ENCODE measurements at regions of chr21 and their contacts with region 1.

Region 1: DNA sequence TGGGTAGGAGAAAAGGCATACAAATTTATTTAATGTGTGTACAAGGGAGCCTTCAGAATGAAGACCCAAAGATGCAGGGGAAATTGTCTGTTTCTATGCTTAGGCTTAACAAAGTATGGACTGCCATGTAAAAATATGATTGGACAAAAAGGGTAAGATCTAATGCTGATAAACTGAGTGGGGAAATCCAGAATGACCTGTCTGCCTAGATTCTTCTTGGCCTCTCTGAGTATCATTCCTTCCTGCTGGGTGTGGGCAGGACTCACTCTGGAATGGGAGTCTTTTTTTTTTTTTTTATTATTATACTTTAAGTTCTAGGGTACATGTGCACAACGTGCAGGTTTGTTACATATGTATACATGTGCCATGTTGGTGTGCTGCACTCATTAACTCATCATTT is 61.0 kb downstream of the IGSF5 start:
- DNase-seq: no peak
- ATAC-seq: no peak

Region 2: DNA sequence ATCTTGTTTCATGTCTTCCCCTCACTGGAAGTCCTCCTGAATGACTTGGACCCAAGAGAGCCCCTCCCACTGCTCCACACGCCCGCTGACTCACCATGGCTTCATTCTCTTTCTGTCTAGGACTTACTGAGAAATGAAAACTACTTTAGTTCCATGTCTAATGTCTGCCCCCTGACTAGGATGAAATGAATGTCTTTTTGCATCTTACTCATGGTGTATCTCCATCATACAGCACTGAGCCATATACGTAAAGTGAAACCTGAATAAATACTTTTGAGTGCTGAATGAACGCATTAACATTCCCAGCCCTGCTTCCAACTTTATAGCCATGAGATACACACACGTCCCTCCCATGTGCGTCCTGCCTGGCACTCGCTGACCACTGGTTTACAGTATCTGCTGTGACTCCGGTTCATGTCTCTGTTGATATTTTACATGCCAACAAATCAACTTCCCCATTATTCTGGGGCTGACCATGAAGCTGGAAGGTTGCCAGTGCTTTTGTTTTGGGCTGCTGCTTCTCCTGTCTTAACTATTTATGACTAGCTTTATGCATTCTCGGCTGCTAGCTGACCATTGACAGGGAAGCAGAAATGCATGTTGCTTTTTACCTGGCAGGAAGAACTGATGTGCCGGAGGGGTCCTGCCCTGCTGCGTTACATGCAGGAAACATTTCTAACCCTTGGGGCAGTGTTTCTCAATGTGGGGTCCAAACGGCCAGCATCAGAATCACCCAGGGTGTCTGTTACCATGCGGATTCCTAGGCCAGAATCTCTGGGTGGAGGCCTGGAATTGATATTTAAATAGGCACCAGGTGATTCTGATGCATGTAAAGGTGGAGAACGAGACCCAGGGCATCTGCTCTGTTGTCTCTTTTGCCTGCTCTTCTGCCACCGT is 243.7 kb after region 1 on chr21:
- intact Hi-C with region 1: loop called (anchors 10 kb)
- DNase-seq: no peak
- ATAC-seq: no peak